Activated naive CD4-positive, alpha-beta T cell treated with anti-CD3 and anti-CD28 coated beads for 36 hours (primary cell): ENCODE measurements at regions of chr13 and their contacts with region 1.

Region 1: DNA sequence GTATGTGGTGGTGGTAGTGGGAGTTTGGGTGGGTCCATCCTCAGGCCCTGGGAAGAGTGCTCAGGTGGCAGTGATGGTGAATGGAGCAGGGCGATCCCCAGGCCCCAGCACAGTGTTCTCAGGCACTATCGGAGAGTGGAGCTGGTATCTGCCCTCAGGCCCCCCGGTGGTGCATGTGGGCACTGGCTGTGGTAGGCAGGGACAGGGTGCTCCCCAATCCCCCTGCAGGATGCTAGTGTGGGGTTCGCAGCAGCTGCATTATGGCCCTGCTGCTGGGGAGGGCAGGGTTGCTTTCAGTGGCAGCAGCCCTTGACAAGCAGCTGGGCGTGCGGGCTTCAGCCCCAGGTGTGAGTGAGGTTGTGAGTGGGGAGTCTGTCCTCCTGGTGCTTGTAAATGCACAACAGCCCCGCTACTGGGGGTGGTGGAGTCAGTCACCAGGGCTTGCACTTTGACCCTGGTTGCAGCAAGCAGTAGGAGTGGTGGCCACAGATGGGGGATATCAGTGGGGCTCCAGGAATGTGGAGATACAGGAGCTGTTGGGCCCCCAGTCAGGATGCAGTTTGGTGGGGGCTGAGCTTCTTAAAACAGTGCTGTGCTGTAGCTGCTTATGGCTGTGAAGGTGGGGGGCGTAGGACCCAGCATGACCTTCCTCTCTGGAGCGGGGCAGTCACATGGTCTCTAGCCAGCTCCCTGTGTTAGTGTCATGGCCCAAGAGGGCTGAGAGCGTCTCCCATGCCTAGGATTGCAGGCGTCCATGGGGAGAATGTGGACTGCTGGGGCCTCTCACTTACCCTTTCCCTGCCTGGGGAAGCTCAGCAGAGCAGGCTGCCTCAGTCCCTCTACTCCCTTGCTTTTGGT is 38.7 kb upstream of the ARHGEF7 start:
- DNase-seq: no peak
- H3K4me3 Mint-ChIP-seq: no peak overlapping the region
- H3K27ac Mint-ChIP-seq: no peak overlapping the region
- H3K4me1 Mint-ChIP-seq: no peaks in the 10 kb centered on the region
- H3K27me3 Mint-ChIP-seq: peaks cover 13% of the 10 kb centered on the region

Region 2: DNA sequence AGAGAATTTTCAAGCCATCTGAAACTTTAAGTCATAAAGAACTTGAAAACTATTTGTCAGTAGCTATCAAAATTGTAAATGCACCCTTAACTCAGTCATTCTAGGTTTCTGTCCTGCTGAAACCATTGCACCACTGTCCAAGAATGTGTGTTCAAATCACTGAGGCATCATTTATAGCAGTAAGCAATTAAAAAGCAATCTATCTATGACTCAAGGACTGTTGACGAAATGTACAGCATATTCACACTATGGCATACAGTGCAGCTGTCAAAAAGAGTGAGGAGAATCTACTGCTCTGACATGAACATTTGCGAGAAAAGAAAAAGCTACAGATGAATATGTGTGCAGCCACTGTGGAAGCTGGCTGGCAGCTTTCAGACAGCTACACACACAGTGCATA is 291.7 kb before region 1 on chr13:
- CTCF ChIA-PET with region 1: no interaction called
- intact Hi-C with region 1: no loop called
- DNase-seq: no peak
- H3K4me3 Mint-ChIP-seq: no peak overlapping the region
- H3K27ac Mint-ChIP-seq: no peak overlapping the region
- H3K4me1 Mint-ChIP-seq: no peaks in the 10 kb centered on the region
- H3K27me3 Mint-ChIP-seq: peaks cover 18% of the 10 kb centered on the region

Region 3: DNA sequence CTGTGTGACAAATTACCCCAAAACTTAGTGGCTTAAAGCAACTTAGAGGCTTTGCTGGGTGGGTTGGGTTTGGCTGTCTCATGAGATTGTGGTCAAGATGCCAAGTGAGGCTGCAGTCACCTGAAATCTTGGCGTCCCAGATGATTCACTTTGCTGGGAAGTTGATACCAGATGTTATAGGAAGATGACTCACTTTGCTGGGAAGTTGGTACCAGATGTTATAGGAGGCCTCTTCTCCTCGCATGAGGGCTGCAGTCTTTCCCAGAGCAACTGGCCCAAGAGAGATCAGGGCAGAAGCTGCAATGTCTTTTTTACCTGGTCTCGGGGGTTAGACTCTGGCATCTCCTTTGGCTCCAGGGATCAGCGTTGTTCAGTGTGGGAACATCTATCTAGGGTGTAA is 260.8 kb after region 1 on chr13:
- CTCF ChIA-PET with region 1: no interaction called
- intact Hi-C with region 1: loop called (anchors 10 kb)
- DNase-seq: no peak
- H3K4me3 Mint-ChIP-seq: no peak overlapping the region
- H3K27ac Mint-ChIP-seq: no peak overlapping the region
- H3K4me1 Mint-ChIP-seq: peaks cover 2% of the 10 kb centered on the region
- H3K27me3 Mint-ChIP-seq: no peaks in the 10 kb centered on the region